ENCODE measurements at regions of chr7 and their contacts with region 1.

Region 1: GRCh38 chr7:139645572-139646523 is 122.4 kb downstream of the CLEC2L start:
- DNase-seq: peak; percentile 47 to 92
- H3K4me3 ChIP-seq: no peak overlapping the region
- H3K27ac ChIP-seq: no peak overlapping the region
- H3K4me1 ChIP-seq: peaks cover 7 to 12% (median 9%) of the 10 kb centered on the region in 4 experiments
- H3K27me3 ChIP-seq: no peaks in the 10 kb centered on the region
- CTCF ChIP-seq: peak; percentile 68 to 91 (median 88)
- EP300 ChIP-seq: no peak
- POLR2A ChIP-seq: no peak
- RAD21 ChIP-seq: peak; percentile 97 to 98

Region 2: GRCh38 chr7:139620676-139621344 is 25.0 kb before region 1 on chr7:
- CTCF ChIA-PET with region 1: interaction called, 76 read pairs
- POLR2A ChIA-PET with region 1: no interaction called
- DNase-seq: peak in 1 of 2 experiments; percentile 93
- H3K4me3 ChIP-seq: no peak overlapping the region
- H3K27ac ChIP-seq: no peak overlapping the region
- H3K4me1 ChIP-seq: no peaks in the 10 kb centered on the region; a peak in 1 of 7 replicates
- H3K27me3 ChIP-seq: no peaks in the 10 kb centered on the region
- CTCF ChIP-seq: peak; percentile 88 to 90 (median 90)
- EP300 ChIP-seq: no peak
- POLR2A ChIP-seq: no peak
- RAD21 ChIP-seq: peak; percentile 90 to 93

Region 3: DNA sequence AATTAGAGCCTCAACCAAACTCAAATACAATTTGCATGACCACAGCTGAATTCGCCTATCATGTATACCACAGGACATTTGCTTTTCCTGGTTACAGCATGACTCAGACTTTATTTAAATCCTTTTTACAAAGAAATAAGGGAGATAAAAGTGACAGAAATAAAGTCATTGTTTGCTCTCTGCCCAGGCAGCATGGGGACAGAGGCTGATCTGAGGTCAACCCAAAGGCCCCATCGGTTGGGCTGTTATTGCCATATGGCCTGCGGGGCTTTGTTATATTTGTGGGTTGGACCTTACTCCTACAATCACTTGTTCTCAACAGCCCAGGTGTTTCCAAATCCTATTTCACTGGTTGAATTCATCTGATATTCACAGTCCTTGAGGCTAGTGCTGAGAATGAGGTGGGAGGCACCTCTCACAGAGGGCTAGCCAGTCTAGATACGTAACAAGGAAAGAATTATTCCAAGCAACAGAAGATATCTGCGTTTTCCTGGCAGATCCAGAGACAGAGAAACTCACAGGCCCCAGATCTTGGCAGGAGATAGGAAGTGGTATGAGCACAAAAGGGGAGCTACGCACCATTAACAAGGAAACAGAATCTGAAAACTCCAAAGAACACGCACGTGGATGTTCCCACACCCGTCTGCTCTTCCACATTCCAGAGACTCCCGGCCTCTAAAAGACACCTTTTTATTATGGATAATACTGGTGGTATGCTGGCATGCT is 14.6 kb after region 1 on chr7:
- CTCF ChIA-PET with region 1: interaction called, 23 read pairs
- POLR2A ChIA-PET with region 1: no interaction called
- DNase-seq: no peak
- H3K4me3 ChIP-seq: no peak overlapping the region
- H3K27ac ChIP-seq: no peak overlapping the region
- H3K4me1 ChIP-seq: peaks cover 1 to 19% (median 12%) of the 10 kb centered on the region in 4 experiments; a peak in 5 of 7 replicates
- H3K27me3 ChIP-seq: no peaks in the 10 kb centered on the region
- CTCF ChIP-seq: no peak
- EP300 ChIP-seq: no peak
- POLR2A ChIP-seq: no peak
- RAD21 ChIP-seq: no peak

Region 4: DNA sequence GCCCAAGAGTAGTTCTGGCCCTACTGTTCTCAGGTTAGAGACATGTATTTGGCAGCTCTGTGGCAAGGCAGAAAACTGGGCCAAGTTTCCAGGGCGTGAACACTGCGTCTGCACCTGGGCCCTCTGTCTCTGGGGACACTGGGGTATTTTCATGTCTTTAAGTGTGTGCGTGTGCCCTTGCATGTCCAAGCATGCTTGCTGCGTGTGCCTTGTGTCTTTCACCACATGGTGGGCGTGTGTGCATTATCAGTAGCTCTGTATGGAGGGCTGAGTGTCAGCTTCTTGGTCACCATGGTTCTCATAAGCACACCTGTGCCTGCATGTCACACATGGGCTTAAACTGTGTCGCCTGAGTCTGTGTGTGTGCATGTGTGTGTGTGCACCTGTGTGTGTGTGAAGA is 62.7 kb after region 1 on chr7:
- CTCF ChIA-PET with region 1: interaction called, 34 read pairs
- POLR2A ChIA-PET with region 1: no interaction called
- DNase-seq: no peak
- H3K4me3 ChIP-seq: no peak overlapping the region
- H3K27ac ChIP-seq: no peak overlapping the region
- H3K4me1 ChIP-seq: peaks cover 13 to 23% (median 16%) of the 10 kb centered on the region in 4 experiments
- H3K27me3 ChIP-seq: no peaks in the 10 kb centered on the region
- CTCF ChIP-seq: no peak
- EP300 ChIP-seq: no peak
- POLR2A ChIP-seq: no peak
- RAD21 ChIP-seq: no peak

Region 5: GRCh38 chr7:139753081-139753692 is 107.3 kb after region 1 on chr7:
- CTCF ChIA-PET with region 1: interaction called, 25 read pairs
- POLR2A ChIA-PET with region 1: no interaction called
- DNase-seq: no peak
- H3K4me3 ChIP-seq: no peak overlapping the region
- H3K27ac ChIP-seq: no peak overlapping the region
- H3K4me1 ChIP-seq: no peaks in the 10 kb centered on the region; a peak in 1 of 7 replicates
- H3K27me3 ChIP-seq: no peaks in the 10 kb centered on the region
- CTCF ChIP-seq: peak; percentile 30 to 55 (median 32)
- EP300 ChIP-seq: no peak
- POLR2A ChIP-seq: no peak
- RAD21 ChIP-seq: peak; percentile 32 to 44; a peak in 2 of 4 replicates

Region 6: GRCh38 chr7:139829025-139829774 is 183.4 kb after region 1 on chr7 and contains the start of gene TBXAS1:
- CTCF ChIA-PET with region 1: interaction called, 23 read pairs
- POLR2A ChIA-PET with region 1: no interaction called
- DNase-seq: no peak
- H3K4me3 ChIP-seq: no peak within 1 kb of the TSS
- H3K27ac ChIP-seq: no peak within 1 kb of the TSS
- H3K4me1 ChIP-seq: no peaks in the 10 kb centered on the region; a peak in 1 of 7 replicates
- H3K27me3 ChIP-seq: no peaks in the 10 kb centered on the region
- CTCF ChIP-seq: no peak
- EP300 ChIP-seq: no peak
- POLR2A ChIP-seq: no peak
- RAD21 ChIP-seq: no peak
- total RNA-seq, gene TBXAS1: 1.1 and 2.1 TPM in 2 replicates

Region 7: DNA sequence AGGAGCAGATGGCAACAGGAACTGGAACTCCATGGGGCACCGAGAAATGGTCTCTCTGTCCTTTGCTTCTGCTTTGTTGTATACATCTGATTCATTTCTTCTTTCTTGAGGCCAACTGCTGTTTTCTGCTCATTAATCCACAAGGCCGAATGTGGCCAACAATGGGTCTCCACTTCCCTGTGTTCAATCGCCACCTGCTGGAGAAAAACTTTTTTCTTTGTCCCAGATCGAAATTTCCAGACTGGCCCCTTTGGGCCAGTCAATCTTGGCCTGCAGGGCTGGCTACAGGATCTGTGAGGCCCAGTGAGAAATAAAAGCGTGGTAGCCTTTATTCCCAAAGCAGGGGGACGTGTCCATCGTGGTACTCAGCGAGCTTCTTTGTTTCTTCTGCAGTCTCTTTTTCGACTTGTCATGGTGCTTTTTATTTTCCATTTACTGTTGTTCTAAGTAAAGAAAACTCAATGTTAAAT is 358.1 kb after region 1 on chr7:
- CTCF ChIA-PET with region 1: interaction called, 122 read pairs
- POLR2A ChIA-PET with region 1: no interaction called
- DNase-seq: peak; percentile 15 to 64
- H3K4me3 ChIP-seq: no peak overlapping the region
- H3K27ac ChIP-seq: no peak overlapping the region
- H3K4me1 ChIP-seq: no peaks in the 10 kb centered on the region
- H3K27me3 ChIP-seq: no peaks in the 10 kb centered on the region
- CTCF ChIP-seq: peak; percentile 15 to 76 (median 58)
- EP300 ChIP-seq: no peak
- POLR2A ChIP-seq: no peak
- RAD21 ChIP-seq: peak; percentile 78 to 86